ENCODE measurements at regions of chr13 and their contacts with region 1.

Region 1: DNA sequence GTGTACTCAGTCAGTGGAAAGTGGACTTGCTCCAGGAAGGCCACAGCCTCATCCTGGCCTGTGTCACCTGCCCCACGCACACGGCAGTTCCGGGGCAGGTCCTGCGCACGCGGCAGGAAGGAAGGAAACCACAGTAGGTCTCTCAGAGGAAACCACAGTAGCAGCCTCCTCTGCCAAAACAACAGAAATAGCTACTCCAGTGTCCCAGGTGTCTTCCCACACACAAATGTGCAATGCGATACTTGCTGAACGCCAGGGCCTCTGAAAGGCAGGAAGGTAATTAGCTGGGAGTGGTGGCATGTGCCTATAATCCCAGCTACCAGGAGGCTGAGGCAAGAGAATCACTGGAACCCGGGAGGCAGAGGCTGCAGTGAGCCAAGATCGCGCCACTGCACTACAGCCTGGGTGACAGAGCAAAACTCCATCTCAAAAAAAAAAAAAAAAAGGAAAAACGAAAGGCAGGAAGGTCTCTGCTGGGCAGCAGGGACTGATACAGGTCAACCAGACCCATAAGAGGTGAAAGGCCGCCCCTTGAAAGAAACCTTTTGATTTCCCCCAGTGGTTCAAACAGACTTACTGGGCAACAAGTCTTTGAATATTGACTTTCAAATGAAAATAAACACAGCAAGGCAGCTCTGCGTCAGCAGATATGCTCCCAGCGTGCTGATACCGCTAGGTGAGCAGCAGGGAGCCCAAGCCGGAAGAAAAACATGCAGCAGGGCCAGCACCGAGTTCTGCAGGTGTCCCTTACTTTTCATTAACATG is 49.5 kb downstream of the CRYL1 start:
- DNase-seq: peak; percentile 46 to 90 (median 84)
- ATAC-seq: peak; percentile 96
- H3K4me3 ChIP-seq: peak overlapping the region; percentile 59
- H3K4me3 Mint-ChIP-seq: peak overlapping the region; percentile 77 to 92 (median 86)
- H3K27ac ChIP-seq: peak overlapping the region; percentile 77
- H3K27ac Mint-ChIP-seq: peak overlapping the region; percentile 89 to 99 (median 98)
- H3K4me1 ChIP-seq: peaks cover 21 to 25% of the 10 kb centered on the region in 2 donors
- H3K4me1 Mint-ChIP-seq: peaks cover 18 to 79% (median 55%) of the 10 kb centered on the region in 7 donors
- H3K27me3 ChIP-seq: no peaks in the 10 kb centered on the region
- H3K27me3 Mint-ChIP-seq: peaks cover 0 to 5% (median 0%) of the 10 kb centered on the region in 5 donors

Region 2: GRCh38 chr13:19863323-19864023 is 612.6 kb before region 1 on chr13 and contains the start of gene ZMYM5:
- CTCF ChIA-PET with region 1: no interaction called
- POLR2A ChIA-PET with region 1: interaction called, 3 read pairs
- intact Hi-C with region 1: loop called in 1 of 2 experiments (anchors 5 kb)
- DNase-seq: peak; percentile 87 to 96 (median 90)
- ATAC-seq: peak; percentile 89
- H3K4me3 ChIP-seq: peak within 1 kb of the TSS; percentile 80
- H3K4me3 Mint-ChIP-seq: peak within 1 kb of the TSS; percentile 85 to 98 (median 97)
- H3K27ac ChIP-seq: peak within 1 kb of the TSS; percentile 84
- H3K27ac Mint-ChIP-seq: peak within 1 kb of the TSS; percentile 90 to 98 (median 97)
- H3K4me1 ChIP-seq: peaks cover 22 to 23% of the 10 kb centered on the region in 2 donors
- H3K4me1 Mint-ChIP-seq: peaks cover 12 to 43% (median 37%) of the 10 kb centered on the region in 7 donors
- H3K27me3 ChIP-seq: no peaks in the 10 kb centered on the region
- H3K27me3 Mint-ChIP-seq: no peaks in the 10 kb centered on the region
- total RNA-seq, gene ZMYM5: 17.5 to 25.6 (median 24.7) TPM

Region 3: DNA sequence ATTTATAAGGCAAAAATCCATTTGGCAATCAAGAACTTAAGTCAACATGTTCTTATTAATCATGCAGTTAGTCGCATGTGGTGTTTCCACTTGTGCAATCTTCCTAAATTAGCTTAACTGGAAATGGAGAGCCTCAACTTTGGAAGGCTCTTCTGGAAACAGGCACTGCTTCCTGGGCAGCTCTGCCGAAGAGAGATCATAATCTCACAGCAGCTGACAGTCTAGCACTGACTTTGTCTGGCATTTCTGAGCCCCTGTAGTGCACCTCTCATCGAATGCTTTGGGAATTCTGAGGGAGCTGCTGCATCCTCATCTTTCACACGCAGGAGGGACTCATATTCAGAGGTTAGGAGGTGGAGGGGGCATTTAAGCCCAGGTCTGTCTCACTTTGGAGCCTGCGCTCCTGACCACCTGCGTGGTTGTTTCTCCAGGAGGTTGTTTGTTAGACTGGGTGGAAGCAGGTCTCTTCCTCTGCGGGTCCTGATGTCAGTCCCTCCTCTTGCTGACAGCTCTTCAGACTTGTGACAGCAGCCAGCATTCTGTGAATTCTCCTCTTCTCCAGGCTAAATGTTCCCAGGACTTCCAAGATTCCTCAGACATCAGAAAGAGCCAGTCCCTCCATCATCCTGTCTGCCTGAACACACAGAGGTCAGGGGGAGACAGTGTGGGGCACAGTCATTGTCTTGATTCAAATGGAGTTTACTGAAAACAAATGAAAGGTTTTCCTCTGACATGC is 143.6 kb before region 1 on chr13:
- CTCF ChIA-PET with region 1: no interaction called
- POLR2A ChIA-PET with region 1: no interaction called
- intact Hi-C with region 1: no loop called
- DNase-seq: no peak
- ATAC-seq: no peak
- H3K4me3 ChIP-seq: no peak overlapping the region
- H3K4me3 Mint-ChIP-seq: no peak overlapping the region
- H3K27ac ChIP-seq: no peak overlapping the region
- H3K27ac Mint-ChIP-seq: no peak overlapping the region
- H3K4me1 ChIP-seq: no peaks in the 10 kb centered on the region
- H3K4me1 Mint-ChIP-seq: peaks cover 0 to 9% (median 0%) of the 10 kb centered on the region in 7 donors
- H3K27me3 ChIP-seq: no peaks in the 10 kb centered on the region
- H3K27me3 Mint-ChIP-seq: peaks cover 0 to 29% (median 0%) of the 10 kb centered on the region in 5 donors

Region 4: DNA sequence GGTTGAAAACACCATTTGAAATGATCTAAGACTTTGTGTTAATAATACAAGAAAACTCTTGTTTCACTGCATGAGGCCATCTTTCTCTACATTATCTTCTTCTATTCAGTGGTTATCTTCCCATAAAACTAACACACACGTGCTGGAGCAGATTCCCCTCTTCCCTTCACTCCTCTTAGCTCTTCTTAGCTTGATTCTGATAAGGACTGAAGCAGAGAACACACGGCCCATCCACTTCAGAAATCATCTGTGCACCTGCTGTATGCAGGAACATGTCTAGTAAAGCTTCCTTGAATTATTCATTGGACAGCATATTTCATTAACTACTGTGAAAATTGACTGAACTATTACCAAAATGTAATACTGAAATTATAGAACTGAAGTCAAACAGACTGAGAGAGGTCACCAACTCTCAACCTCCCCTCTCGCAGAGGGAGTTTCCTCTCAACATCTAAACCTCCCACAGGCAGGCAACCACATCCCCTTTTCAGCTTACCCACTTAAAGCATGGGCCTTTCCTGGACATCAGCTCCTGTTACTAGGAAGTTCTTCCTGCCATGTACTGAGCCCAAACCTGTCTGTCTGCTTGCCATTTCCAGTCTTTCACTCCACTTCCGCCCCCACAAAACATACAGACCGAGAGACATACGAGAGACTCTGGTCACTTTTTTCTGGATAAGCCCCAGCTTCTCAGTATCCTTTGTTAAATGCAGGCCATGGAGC is 64.3 kb before region 1 on chr13:
- CTCF ChIA-PET with region 1: no interaction called
- POLR2A ChIA-PET with region 1: interaction called, 4 read pairs
- intact Hi-C with region 1: loop called in 1 of 2 experiments (anchors 5 kb)
- DNase-seq: peak in 7 of 9 donors; percentile 16 to 52 (median 45)
- ATAC-seq: peak; percentile 89
- H3K4me3 ChIP-seq: no peak overlapping the region
- H3K4me3 Mint-ChIP-seq: peak overlapping the region; percentile 37 to 80 (median 64)
- H3K27ac ChIP-seq: no peak overlapping the region
- H3K27ac Mint-ChIP-seq: peak overlapping the region; percentile 78 to 93 (median 84)
- H3K4me1 ChIP-seq: peaks cover 13 to 25% of the 10 kb centered on the region in 2 donors
- H3K4me1 Mint-ChIP-seq: peaks cover 11 to 34% (median 29%) of the 10 kb centered on the region in 7 donors
- H3K27me3 ChIP-seq: no peaks in the 10 kb centered on the region
- H3K27me3 Mint-ChIP-seq: no peaks in the 10 kb centered on the region

Region 5: DNA sequence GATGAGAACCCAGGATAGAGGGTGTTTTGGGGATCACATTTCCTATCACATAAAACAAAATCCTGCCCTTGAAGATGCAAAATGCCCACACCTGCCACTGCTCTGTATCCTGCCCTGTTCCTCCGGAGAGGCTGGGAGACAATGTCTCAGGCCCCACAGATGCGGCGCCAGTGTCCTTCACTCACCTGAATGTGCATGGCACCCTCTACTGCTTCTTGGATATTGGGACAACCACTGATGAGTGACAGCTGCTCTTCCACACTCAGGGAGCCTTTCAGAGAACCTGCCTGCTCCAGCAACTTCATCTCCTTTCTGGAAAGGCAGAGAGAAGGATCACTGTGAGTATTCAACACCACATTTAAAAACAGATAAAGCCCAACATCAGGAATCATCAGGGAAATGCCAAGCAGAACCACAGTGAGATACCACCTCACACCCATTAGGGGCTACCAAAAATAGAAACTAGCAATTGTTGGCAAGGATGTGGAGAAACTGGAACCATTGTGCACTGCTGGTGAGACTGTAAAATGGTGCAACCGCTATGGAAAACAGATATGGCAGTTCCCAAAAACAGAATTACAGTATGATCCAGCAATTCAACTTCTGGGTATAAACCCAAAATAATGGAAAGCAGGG is 13.2 kb after region 1 on chr13:
- CTCF ChIA-PET with region 1: no interaction called
- POLR2A ChIA-PET with region 1: interaction called, 9 read pairs
- intact Hi-C with region 1: loop called in 1 of 2 experiments (anchors 1 kb)
- DNase-seq: peak in 4 of 9 donors; percentile 24 to 61 (median 46)
- ATAC-seq: peak; percentile 85
- H3K4me3 ChIP-seq: no peak overlapping the region
- H3K4me3 Mint-ChIP-seq: no peak overlapping the region
- H3K27ac ChIP-seq: no peak overlapping the region
- H3K27ac Mint-ChIP-seq: peak overlapping the region in 2 of 9 donors; percentile 51 to 75
- H3K4me1 ChIP-seq: no peaks in the 10 kb centered on the region
- H3K4me1 Mint-ChIP-seq: peaks cover 5 to 17% (median 12%) of the 10 kb centered on the region in 7 donors
- H3K27me3 ChIP-seq: no peaks in the 10 kb centered on the region
- H3K27me3 Mint-ChIP-seq: no peaks in the 10 kb centered on the region

Region 6: GRCh38 chr13:20518660-20519100 is 42.6 kb after region 1 on chr13:
- CTCF ChIA-PET with region 1: no interaction called
- POLR2A ChIA-PET with region 1: no interaction called
- intact Hi-C with region 1: no loop called
- DNase-seq: no peak
- ATAC-seq: no peak
- H3K4me3 ChIP-seq: no peak overlapping the region
- H3K4me3 Mint-ChIP-seq: peak overlapping the region in 1 of 10 donors; percentile 31
- H3K27ac ChIP-seq: no peak overlapping the region
- H3K27ac Mint-ChIP-seq: peak overlapping the region in 2 of 9 donors; percentile 7 to 27
- H3K4me1 ChIP-seq: no peaks in the 10 kb centered on the region
- H3K4me1 Mint-ChIP-seq: peaks cover 0 to 38% (median 16%) of the 10 kb centered on the region in 7 donors
- H3K27me3 ChIP-seq: no peaks in the 10 kb centered on the region
- H3K27me3 Mint-ChIP-seq: no peaks in the 10 kb centered on the region

Region 7: DNA sequence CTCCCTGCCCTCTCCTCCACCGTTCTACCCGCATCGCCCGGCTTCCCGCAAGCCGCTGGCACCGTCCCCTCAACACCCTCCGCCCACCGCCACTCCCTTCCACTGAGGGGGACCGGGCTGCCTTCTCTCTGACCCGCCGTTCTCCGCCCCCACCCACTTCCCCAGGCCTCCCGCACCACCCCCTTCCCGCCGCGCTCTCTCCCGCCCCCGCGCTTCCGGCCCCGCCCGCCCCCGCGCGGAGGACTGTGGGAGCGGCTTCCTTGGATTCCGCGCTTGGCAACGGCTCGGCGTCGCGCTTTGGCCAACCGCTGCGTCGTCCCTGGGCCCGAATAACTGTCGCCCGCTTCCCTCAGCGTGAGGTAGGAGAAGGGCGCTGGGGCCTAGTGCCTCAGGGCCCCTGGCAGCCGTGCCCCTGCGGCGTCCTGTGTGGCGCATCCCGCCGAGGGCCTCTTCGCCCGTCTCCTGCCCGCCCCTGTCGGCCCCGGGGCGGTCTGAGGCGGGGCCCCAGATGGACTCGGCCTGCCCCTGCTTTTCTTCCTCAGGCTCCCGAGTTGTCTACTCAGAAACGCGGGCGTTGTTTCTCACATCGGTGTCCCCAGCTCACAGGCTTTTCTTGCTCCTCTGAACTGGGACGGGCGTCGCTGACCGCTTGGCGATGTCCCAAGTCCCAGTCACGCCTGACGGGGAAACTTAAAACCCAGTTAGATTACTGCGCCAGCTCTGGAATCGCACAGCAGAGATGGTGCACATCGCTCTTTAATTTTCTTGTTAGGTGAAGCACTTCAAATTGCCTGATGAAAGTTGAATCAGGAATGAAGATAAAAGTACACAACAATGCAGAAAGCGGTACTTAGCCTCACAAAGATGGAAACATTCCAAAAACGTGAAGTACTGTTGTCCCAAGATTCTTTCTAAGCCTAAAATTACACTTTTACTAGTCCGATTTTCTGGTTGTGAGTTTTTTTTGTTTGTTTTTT is 91.1 kb after region 1 on chr13 and contains the start of gene IFT88:
- CTCF ChIA-PET with region 1: no interaction called
- POLR2A ChIA-PET with region 1: interaction called, 5 read pairs
- intact Hi-C with region 1: loop called in 1 of 2 experiments (anchors 2 kb)
- DNase-seq: peak; percentile 72 to 87 (median 80)
- ATAC-seq: peak; percentile 94
- H3K4me3 ChIP-seq: peak within 1 kb of the TSS; percentile 52
- H3K4me3 Mint-ChIP-seq: peak within 1 kb of the TSS; percentile 88 to 97 (median 93)
- H3K27ac ChIP-seq: peak within 1 kb of the TSS; percentile 73
- H3K27ac Mint-ChIP-seq: peak within 1 kb of the TSS; percentile 92 to 94 (median 93)
- H3K4me1 ChIP-seq: peaks cover 0 to 8% of the 10 kb centered on the region in 2 donors
- H3K4me1 Mint-ChIP-seq: peaks cover 7 to 18% (median 17%) of the 10 kb centered on the region in 7 donors
- H3K27me3 ChIP-seq: no peaks in the 10 kb centered on the region
- H3K27me3 Mint-ChIP-seq: no peaks in the 10 kb centered on the region
- total RNA-seq, gene IFT88: 5.0 to 17.0 (median 11.7) TPM

Region 8: DNA sequence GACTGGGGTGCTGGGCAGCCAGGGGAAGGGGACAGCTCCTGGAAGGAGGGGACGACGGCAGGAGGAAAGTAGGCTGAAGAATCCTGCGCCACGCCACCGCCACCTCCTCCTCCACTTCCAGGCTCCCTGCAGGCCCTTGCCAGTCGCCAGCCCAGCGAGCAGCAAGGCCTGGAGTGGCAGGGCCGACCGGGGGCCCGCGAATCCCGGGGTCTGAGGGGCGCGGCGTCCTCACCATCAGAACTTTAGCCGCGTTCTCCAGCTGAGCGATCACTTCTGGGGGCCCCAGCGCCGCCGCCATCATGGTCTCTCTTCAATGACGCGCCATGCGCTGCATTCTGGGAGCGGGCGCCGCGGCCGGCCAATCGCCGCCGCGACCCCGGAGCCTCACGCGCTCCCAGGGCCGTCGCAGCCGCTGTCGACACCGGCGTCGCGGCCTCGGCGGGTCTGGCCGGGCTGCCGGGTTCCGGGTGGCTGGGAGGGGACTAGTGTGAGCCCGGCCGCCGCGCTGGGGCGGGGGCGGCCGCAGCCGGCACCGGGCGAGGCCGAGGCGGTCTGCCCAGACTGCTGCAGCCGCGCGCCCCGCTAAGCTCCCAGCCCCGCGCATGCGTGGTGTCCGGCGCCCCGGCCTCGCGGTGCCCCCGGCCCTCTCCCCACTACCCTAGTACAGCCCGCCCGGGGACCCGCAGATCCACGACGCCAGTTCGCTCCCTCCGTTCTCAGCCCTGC is 426.5 kb after region 1 on chr13 and contains the start of gene XPO4:
- CTCF ChIA-PET with region 1: no interaction called
- POLR2A ChIA-PET with region 1: interaction called, 5 read pairs
- intact Hi-C with region 1: loop called (anchors 1 to 5 kb)
- DNase-seq: peak; percentile 68 to 85 (median 77)
- ATAC-seq: peak; percentile 97
- H3K4me3 ChIP-seq: peak within 1 kb of the TSS; percentile 98
- H3K4me3 Mint-ChIP-seq: peak within 1 kb of the TSS; percentile 93 to 98 (median 96)
- H3K27ac ChIP-seq: peak within 1 kb of the TSS; percentile 83
- H3K27ac Mint-ChIP-seq: peak within 1 kb of the TSS; percentile 89 to 98 (median 95)
- H3K4me1 ChIP-seq: peaks cover 10 to 21% of the 10 kb centered on the region in 2 donors
- H3K4me1 Mint-ChIP-seq: peaks cover 15 to 41% (median 32%) of the 10 kb centered on the region in 7 donors
- H3K27me3 ChIP-seq: no peaks in the 10 kb centered on the region
- H3K27me3 Mint-ChIP-seq: peaks cover 0 to 3% (median 0%) of the 10 kb centered on the region in 5 donors
- total RNA-seq, gene XPO4: 20.9 to 26.5 (median 23.5) TPM

Measured in naive thymus-derived CD4-positive, alpha-beta T cell (primary cell).